Endothelial cell of umbilical vein (primary cell): ENCODE measurements at regions of chr3 and their contacts with region 1.

Region 1: DNA sequence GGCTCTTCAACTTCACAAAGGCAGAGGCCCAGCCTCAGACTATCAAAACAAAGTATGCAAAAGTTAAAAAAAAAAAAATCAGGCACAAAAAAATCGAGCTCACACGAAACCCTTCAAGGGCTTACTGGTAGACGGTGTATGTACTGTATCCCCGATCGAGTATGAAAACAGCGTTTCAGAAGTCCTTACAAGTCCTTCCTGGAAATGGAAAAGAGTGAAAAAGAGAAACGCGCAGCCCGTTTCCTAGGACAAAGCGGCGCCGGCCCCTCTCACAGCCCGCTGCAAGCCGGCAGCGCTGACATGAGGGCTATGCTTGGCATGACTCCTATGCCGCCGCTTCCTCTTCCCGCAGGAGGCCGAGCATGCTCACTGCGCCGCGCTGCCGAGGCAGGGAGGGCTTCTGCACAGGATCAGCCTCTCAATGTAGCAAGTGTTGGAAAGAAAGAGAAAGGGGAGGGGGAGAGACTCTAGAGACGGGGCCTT is at the start of gene VGLL4:
- DNase-seq: peak; percentile 95
- H3K4me3 ChIP-seq: peak within 1 kb of the TSS; percentile 70 to 99 (median 79)
- H3K27ac ChIP-seq: peak within 1 kb of the TSS; percentile 92
- H3K4me1 ChIP-seq: peaks cover 30% of the 10 kb centered on the region
- H3K27me3 ChIP-seq: no peaks in the 10 kb centered on the region
- CTCF ChIP-seq: peak in 1 of 2 donors; percentile 4
- POLR2A ChIP-seq: peak; percentile 95
- total RNA-seq, gene VGLL4: 58.9 and 67.0 TPM in 2 replicates

Region 2: DNA sequence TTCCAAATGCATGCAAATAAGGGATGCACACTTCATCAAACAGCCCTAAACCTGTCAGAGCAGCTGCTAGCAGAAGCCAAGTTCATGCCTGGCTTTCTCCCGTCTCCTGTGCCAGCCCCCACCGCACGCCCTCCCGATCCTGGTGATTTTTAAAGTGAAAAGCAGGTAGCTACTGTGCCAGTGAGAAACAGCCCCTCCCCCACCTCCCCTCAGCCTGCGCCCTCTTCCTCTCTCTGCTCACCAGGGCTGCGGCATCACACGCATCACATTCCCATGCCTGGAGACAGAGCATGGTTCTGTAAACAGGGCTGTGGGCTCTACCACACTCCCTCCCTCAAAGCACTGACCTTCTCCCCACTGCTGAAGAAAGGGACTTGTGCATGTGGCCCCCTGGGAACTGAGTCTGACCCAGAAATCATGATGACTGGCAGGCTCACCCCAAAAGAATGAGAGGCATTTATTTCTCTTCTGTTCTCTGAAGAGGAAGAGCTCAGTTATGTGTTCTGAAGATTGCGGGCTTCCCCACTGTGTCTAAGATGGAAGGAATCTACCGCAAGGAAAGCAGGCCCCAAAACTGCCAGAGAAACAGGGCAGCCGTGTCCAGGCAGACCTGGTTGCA is 665.6 kb before region 1 on chr3:
- CTCF ChIA-PET with region 1: no interaction called
- POLR2A ChIA-PET with region 1: no interaction called
- dilution Hi-C with region 1: no loop called
- intact Hi-C with region 1: no loop called
- DNase-seq: no peak
- H3K4me3 ChIP-seq: no peak overlapping the region
- H3K27ac ChIP-seq: no peak overlapping the region
- H3K4me1 ChIP-seq: peaks cover under 1% of the 10 kb centered on the region
- H3K27me3 ChIP-seq: peaks cover 4 to 14% of the 10 kb centered on the region in 2 experiments
- CTCF ChIP-seq: no peak
- POLR2A ChIP-seq: no peak

Region 3: GRCh38 chr3:11221818-11222415 is 421.7 kb before region 1 on chr3:
- CTCF ChIA-PET with region 1: no interaction called
- POLR2A ChIA-PET with region 1: no interaction called
- dilution Hi-C with region 1: no loop called
- intact Hi-C with region 1: loop called (anchors 5 kb)
- DNase-seq: no peak
- H3K4me3 ChIP-seq: no peak overlapping the region
- H3K27ac ChIP-seq: no peak overlapping the region
- H3K4me1 ChIP-seq: peaks cover 40% of the 10 kb centered on the region
- H3K27me3 ChIP-seq: no peaks in the 10 kb centered on the region
- CTCF ChIP-seq: peak; percentile 5 to 11
- POLR2A ChIP-seq: no peak

Region 4: GRCh38 chr3:11498646-11499045 is 145.0 kb before region 1 on chr3:
- CTCF ChIA-PET with region 1: no interaction called
- POLR2A ChIA-PET with region 1: no interaction called
- dilution Hi-C with region 1: no loop called
- intact Hi-C with region 1: loop called (anchors 1 kb)
- DNase-seq: peak; percentile 78
- H3K4me3 ChIP-seq: no peak overlapping the region
- H3K27ac ChIP-seq: peak overlapping the region; percentile 93
- H3K4me1 ChIP-seq: peaks cover 35% of the 10 kb centered on the region
- H3K27me3 ChIP-seq: no peaks in the 10 kb centered on the region
- CTCF ChIP-seq: no peak
- POLR2A ChIP-seq: no peak

Region 5: DNA sequence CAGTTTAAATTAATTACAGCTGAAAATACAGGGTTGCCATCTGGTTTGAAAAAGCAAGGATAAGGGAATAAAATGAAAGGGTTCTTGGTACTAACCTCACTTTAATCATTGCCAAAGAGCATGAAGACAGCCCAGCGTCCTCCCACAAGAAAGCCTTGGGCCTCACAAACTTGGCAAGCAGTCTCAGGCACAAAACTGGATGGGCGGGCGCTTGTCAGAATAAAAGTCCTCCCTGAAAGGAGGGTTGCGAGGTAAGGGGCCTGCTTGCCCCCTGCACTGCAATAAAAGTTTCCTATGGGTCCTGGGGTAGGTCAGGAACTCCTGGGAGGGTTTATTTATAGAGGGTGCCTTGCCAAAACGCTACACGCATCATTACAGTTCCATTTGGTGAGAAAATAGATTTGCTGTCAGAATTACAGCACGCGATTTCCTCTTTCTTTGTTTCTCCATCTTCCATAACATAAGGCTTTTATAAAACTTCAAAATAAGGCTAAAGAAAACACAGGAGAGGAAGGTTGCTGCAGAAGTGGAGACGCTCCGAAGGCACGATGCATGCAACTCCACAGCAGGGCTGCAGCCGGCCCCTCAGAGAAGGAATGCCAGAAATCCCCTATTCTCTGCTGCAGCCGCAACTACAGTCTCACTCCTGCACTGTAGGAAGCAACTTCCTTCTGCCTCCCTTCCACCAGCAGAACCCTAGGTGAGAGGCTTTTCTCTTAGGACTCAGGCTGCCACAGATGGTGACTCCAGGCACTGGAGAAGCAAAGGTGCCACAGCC is 61.3 kb before region 1 on chr3:
- CTCF ChIA-PET with region 1: interaction called, 3 read pairs
- POLR2A ChIA-PET with region 1: no interaction called
- dilution Hi-C with region 1: no loop called
- intact Hi-C with region 1: loop called (anchors 1 kb)
- DNase-seq: peak; percentile 92
- H3K4me3 ChIP-seq: peak overlapping the region in 1 of 3 experiments; percentile 45
- H3K27ac ChIP-seq: peak overlapping the region; percentile 68
- H3K4me1 ChIP-seq: peaks cover 27% of the 10 kb centered on the region
- H3K27me3 ChIP-seq: no peaks in the 10 kb centered on the region
- CTCF ChIP-seq: no peak
- POLR2A ChIP-seq: peak; percentile 12

Region 6: DNA sequence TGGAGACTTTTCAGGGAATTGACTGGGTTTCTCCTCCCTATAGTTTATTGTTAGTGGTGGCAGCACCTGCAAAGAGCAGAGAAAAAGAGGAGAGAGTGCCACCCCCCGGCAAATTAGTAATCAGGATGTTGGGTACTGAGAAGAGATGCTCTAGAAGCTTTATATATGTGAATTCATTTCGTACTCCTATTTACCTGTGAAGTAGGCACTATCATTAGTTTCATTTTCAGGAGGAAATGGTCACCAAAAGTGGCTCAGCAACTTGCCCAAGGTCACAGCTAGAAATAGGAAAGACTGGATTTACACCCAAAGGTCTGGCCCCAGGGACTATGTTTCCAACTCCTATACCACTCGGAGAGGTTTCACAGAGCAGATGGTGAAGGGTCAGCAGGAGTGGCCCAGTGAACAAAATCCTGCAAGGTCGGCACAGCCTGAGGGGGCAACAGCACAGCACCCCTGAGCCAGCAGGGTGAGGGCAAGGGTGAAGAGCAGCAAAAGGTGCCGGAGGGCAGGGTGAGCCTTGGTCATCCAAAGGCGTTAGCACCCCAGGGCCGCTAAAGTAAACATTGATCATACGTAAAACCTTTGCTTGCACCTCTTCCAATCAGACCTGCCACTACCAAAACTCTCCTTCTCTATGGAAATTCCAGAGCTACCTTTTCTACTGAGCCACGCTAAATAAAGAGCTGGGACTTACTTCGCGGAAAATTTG is 23.5 kb before region 1 on chr3:
- CTCF ChIA-PET with region 1: interaction called, 11 read pairs
- POLR2A ChIA-PET with region 1: interaction called, 4 read pairs
- dilution Hi-C with region 1: no loop called
- intact Hi-C with region 1: no loop called
- DNase-seq: no peak
- H3K4me3 ChIP-seq: no peak overlapping the region
- H3K27ac ChIP-seq: no peak overlapping the region
- H3K4me1 ChIP-seq: peaks cover 32% of the 10 kb centered on the region
- H3K27me3 ChIP-seq: no peaks in the 10 kb centered on the region
- CTCF ChIP-seq: no peak
- POLR2A ChIP-seq: no peak

Region 7: GRCh38 chr3:11803977-11804892 is 160.6 kb after region 1 on chr3:
- CTCF ChIA-PET with region 1: no interaction called
- POLR2A ChIA-PET with region 1: no interaction called
- dilution Hi-C with region 1: no loop called
- intact Hi-C with region 1: no loop called
- DNase-seq: peak; percentile 53
- H3K4me3 ChIP-seq: no peak overlapping the region
- H3K27ac ChIP-seq: no peak overlapping the region
- H3K4me1 ChIP-seq: no peaks in the 10 kb centered on the region
- H3K27me3 ChIP-seq: no peaks in the 10 kb centered on the region
- CTCF ChIP-seq: peak; percentile 68 to 70
- POLR2A ChIP-seq: no peak